Endothelial cell of umbilical vein (primary cell): ENCODE measurements at regions of chr4 and their contacts with region 1.

Region 1: GRCh38 chr4:108570993-108571569 is 49.3 kb upstream of the RPL34 start:
- DNase-seq: no peak
- H3K4me3 ChIP-seq: no peak overlapping the region
- H3K27ac ChIP-seq: no peak overlapping the region
- H3K4me1 ChIP-seq: no peaks in the 10 kb centered on the region
- H3K27me3 ChIP-seq: peaks cover 5% of the 10 kb centered on the region in 2 experiments
- CTCF ChIP-seq: no peak
- POLR2A ChIP-seq: no peak

Region 2: GRCh38 chr4:108030332-108030731 is 540.7 kb before region 1 on chr4:
- CTCF ChIA-PET with region 1: interaction called, 93 read pairs
- POLR2A ChIA-PET with region 1: no interaction called
- dilution Hi-C with region 1: no loop called
- intact Hi-C with region 1: loop called (anchors 1 kb)
- DNase-seq: peak; percentile 49
- H3K4me3 ChIP-seq: no peak overlapping the region
- H3K27ac ChIP-seq: no peak overlapping the region
- H3K4me1 ChIP-seq: no peaks in the 10 kb centered on the region
- H3K27me3 ChIP-seq: no peaks in the 10 kb centered on the region
- CTCF ChIP-seq: peak; percentile 17 to 55
- POLR2A ChIP-seq: no peak

Region 3: DNA sequence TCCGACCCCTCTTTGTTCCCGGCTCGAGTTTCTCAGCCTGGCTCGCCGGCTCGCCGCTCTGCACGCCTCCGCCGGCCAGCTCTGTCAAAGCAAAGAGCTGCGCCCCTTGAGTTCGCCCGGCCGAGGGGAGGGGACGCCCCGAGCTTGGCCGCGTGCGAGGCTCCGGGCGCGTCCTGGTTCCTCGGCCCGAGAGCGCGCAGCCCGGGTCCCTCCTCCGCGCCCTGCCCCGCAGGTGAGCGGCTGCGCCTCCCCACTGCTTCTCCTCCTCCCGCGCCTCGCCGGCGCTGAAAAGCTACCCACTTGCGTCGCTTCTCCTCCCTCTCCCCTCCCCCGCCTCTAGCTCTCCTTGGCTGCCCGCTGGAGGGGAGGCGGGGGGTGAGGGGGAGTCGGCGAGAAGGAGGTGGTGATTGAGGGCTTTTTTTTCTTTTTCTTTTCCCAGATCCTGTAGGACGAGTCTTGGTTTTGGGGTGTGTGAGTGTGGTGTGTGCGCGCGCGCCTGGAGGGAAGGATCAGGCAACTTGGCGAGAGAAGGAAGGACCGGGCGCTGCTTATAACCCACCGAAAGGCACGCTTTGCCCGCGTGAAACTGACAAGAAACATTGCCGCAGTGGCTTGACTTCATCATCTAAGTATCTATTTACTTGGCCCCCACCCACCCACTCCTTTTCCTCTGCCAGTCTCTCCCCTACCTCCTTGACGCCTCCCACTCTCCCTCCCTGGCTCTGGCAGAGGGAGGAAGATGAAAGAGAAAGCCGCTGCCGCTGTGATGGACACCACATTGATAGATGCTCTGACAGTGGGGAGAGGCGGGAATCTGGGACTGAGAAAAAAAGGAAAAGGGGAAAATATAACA is 402.2 kb before region 1 on chr4 and contains the start of gene LEF1:
- CTCF ChIA-PET with region 1: no interaction called
- POLR2A ChIA-PET with region 1: no interaction called
- dilution Hi-C with region 1: no loop called
- intact Hi-C with region 1: loop called (anchors 10 kb)
- DNase-seq: peak; percentile 40
- H3K4me3 ChIP-seq: peak within 1 kb of the TSS; percentile 40 to 64 (median 53)
- H3K27ac ChIP-seq: no peak within 1 kb of the TSS
- H3K4me1 ChIP-seq: peaks cover 14% of the 10 kb centered on the region
- H3K27me3 ChIP-seq: peaks cover 70 to 98% of the 10 kb centered on the region in 2 experiments
- CTCF ChIP-seq: no peak
- POLR2A ChIP-seq: no peak
- total RNA-seq, gene LEF1: 0.46 TPM in 1 of 2 replicates, not detected in the other

Region 4: DNA sequence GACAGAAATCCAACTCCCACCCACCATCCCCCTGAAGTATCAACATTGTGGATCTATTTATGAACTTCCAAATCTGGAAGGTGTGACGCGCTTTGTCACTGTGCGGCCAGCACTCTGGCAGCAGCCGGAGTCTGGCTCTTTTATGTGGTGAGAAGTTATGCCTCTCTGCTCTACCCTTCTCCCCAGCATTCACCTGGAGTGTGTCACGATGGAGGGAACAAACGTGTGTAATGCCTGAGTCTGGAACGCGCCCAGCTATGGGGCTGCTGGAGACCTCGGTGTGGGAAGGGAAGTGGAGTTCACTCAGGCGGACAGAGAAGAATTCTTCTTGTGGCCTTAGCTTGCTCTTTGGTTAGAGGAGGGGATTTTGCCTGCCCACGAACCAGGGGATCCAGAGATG is 172.8 kb before region 1 on chr4:
- CTCF ChIA-PET with region 1: no interaction called
- POLR2A ChIA-PET with region 1: no interaction called
- dilution Hi-C with region 1: no loop called
- intact Hi-C with region 1: no loop called
- DNase-seq: no peak
- H3K4me3 ChIP-seq: no peak overlapping the region
- H3K27ac ChIP-seq: no peak overlapping the region
- H3K4me1 ChIP-seq: no peaks in the 10 kb centered on the region
- H3K27me3 ChIP-seq: no peaks in the 10 kb centered on the region
- CTCF ChIP-seq: no peak
- POLR2A ChIP-seq: no peak

Region 5: DNA sequence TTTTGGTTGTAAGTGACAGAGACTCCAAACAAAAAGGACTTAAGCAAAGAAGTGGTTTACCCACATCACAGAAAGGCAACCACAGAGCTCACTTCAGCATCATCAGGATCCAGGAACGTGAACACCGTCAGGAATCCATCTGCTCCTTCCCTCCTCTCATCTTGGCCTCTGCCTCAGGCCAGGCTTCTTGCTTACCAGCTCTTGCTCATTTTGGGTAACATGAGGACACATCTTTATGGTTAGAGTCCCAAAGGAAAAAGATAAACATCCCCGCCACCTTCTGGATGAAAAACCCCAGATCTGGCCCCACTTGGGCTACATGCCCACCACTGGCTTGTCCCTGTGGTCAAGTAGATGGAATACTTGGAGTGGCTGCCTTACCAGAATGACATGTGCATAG is 127.5 kb before region 1 on chr4:
- CTCF ChIA-PET with region 1: no interaction called
- POLR2A ChIA-PET with region 1: no interaction called
- dilution Hi-C with region 1: no loop called
- intact Hi-C with region 1: no loop called
- DNase-seq: no peak
- H3K4me3 ChIP-seq: no peak overlapping the region
- H3K27ac ChIP-seq: no peak overlapping the region
- H3K4me1 ChIP-seq: no peaks in the 10 kb centered on the region
- H3K27me3 ChIP-seq: no peaks in the 10 kb centered on the region
- CTCF ChIP-seq: no peak
- POLR2A ChIP-seq: no peak

Region 6: GRCh38 chr4:108560616-108561015 is 10.5 kb before region 1 on chr4:
- CTCF ChIA-PET with region 1: interaction called, 15 read pairs
- POLR2A ChIA-PET with region 1: no interaction called
- dilution Hi-C with region 1: no loop called
- intact Hi-C with region 1: no loop called
- DNase-seq: peak; percentile 38
- H3K4me3 ChIP-seq: no peak overlapping the region
- H3K27ac ChIP-seq: no peak overlapping the region
- H3K4me1 ChIP-seq: no peaks in the 10 kb centered on the region
- H3K27me3 ChIP-seq: peaks cover 0 to 3% of the 10 kb centered on the region in 2 experiments
- CTCF ChIP-seq: no peak
- POLR2A ChIP-seq: no peak

Region 7: GRCh38 chr4:108586778-108587177 is 15.7 kb after region 1 on chr4:
- CTCF ChIA-PET with region 1: interaction called, 40 read pairs
- POLR2A ChIA-PET with region 1: no interaction called
- dilution Hi-C with region 1: no loop called
- intact Hi-C with region 1: no loop called
- DNase-seq: no peak
- H3K4me3 ChIP-seq: no peak overlapping the region
- H3K27ac ChIP-seq: no peak overlapping the region
- H3K4me1 ChIP-seq: peaks cover 8% of the 10 kb centered on the region
- H3K27me3 ChIP-seq: no peaks in the 10 kb centered on the region
- CTCF ChIP-seq: no peak
- POLR2A ChIP-seq: no peak

Region 8: GRCh38 chr4:108592674-108592986 is 21.5 kb after region 1 on chr4:
- CTCF ChIA-PET with region 1: interaction called, 12 read pairs
- POLR2A ChIA-PET with region 1: no interaction called
- dilution Hi-C with region 1: no loop called
- intact Hi-C with region 1: no loop called
- DNase-seq: peak; percentile 24
- H3K4me3 ChIP-seq: no peak overlapping the region
- H3K27ac ChIP-seq: peak overlapping the region; percentile 93
- H3K4me1 ChIP-seq: peaks cover 18% of the 10 kb centered on the region
- H3K27me3 ChIP-seq: no peaks in the 10 kb centered on the region
- CTCF ChIP-seq: no peak
- POLR2A ChIP-seq: no peak

Region 9: GRCh38 chr4:108620101-108620932 is 49.2 kb after region 1 on chr4 and contains the start of gene RPL34:
- CTCF ChIA-PET with region 1: interaction called, 7 read pairs
- POLR2A ChIA-PET with region 1: no interaction called
- dilution Hi-C with region 1: no loop called
- intact Hi-C with region 1: loop called (anchors 1 kb)
- DNase-seq: peak; percentile 99
- H3K4me3 ChIP-seq: peak within 1 kb of the TSS; percentile 49 to 95 (median 74)
- H3K27ac ChIP-seq: peak within 1 kb of the TSS; percentile 81
- H3K4me1 ChIP-seq: peaks cover 23% of the 10 kb centered on the region
- H3K27me3 ChIP-seq: no peaks in the 10 kb centered on the region
- CTCF ChIP-seq: no peak
- POLR2A ChIP-seq: peak; percentile 97
- total RNA-seq, gene RPL34: 1,114 and 1,139 TPM in 2 replicates